ENCODE measurements at regions of chr5 and their contacts with region 1.

Region 1: DNA sequence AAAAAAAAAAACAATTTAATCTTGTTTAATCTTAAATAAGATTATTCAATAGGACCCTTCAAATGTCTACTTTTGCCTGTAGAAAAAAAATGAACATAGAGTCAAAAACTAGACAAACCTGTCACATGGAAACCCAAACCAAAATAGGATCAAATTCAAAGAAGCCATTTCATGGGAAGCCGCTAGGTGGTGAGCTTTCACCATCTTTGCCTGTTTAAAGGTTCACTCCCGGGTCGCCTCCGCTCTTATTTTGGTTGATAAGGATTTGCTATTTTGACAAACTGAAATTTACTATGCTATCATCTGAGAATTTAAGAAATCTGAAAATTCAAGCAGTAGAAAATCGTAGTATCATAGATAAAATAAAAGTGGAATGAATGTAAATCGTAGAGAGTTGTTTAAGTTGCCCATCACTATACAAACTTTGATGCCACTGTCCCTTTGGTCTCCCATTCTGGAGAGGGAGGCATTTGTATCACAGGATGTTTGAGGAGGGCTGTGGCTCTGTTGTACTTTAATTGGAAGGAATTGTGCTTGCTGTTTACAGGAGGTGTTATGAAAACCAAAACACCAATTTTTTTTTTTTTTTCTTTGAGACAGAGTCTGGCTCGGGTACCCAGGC is 43.5 kb upstream of the DNAH5 start:
- DNase-seq: peak; percentile 81
- ATAC-seq: peak; percentile 54
- H3K4me3 ChIP-seq: no peak overlapping the region
- H3K27ac ChIP-seq: peak overlapping the region; percentile 81
- H3K4me1 ChIP-seq: peaks cover 21% of the 10 kb centered on the region
- H3K27me3 ChIP-seq: no peaks in the 10 kb centered on the region
- CTCF ChIP-seq: peak; percentile 89
- POLR2A ChIP-seq: peak; percentile 51; the same call in 1 of the 2 replicates
- RAD21 ChIP-seq: peak; percentile 95

Region 2: GRCh38 chr5:14142827-14143548 is 155.0 kb after region 1 on chr5 and contains the start of gene TRIO:
- CTCF ChIA-PET with region 1: no interaction called
- POLR2A ChIA-PET with region 1: interaction called, 3 read pairs
- dilution Hi-C with region 1: no loop called
- in situ Hi-C with region 1: loop called (anchors 5 kb)
- intact Hi-C with region 1: loop called (anchors 1 kb)
- DNase-seq: peak; percentile 91
- ATAC-seq: peak; percentile 77
- H3K4me3 ChIP-seq: peak within 1 kb of the TSS; percentile 94
- H3K27ac ChIP-seq: peak within 1 kb of the TSS; percentile 100
- H3K4me1 ChIP-seq: peaks cover 10% of the 10 kb centered on the region
- H3K27me3 ChIP-seq: no peaks in the 10 kb centered on the region
- CTCF ChIP-seq: peak; percentile 45
- POLR2A ChIP-seq: peak; percentile 73
- RAD21 ChIP-seq: peak; percentile 32
- total RNA-seq, gene TRIO: 487 and 522 TPM in 2 replicates

Region 3: DNA sequence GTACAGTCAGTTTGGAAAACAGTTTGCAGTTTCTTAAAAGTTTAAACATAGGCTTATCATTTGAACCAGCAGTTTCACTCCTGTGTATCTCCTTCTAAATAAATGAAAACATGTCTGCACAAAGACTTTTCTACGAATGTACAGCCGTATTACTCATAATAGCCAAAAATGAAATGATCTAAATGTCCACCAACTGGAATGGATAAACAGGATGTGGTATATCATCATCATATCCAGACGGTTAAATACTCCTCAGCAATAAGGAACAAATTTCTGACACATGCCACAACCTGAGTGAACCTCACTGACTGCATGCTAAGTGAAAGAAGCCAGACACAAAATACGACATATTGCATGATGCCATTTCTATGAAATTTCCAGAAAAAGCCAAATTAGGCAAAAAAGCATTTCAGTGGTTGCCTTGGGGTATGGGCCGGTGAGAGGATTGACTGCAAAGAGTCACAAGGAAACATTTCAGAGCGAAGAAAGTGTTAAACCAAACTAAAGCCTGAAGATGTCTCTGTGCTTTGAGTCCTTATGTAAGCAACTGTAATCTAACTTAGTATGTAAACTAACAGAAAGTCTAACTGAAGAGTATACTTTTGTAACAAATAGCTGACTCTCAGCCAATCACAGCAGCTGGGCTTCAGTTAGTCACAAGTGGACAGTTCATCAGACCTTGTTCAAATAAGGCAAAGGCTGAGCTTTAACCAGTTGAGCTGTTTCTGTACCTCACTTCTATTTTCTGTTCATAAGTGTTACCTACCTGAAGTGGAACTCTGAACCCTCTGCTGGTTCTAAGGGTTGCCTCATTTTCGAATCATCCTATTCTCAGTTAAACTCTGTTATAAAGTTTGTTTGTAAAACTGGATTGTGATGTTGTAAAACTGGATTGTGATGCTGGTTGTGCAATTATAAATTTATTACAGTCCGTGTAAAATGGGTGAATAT is 220.4 kb after region 1 on chr5:
- CTCF ChIA-PET with region 1: no interaction called
- POLR2A ChIA-PET with region 1: no interaction called
- dilution Hi-C with region 1: no loop called
- in situ Hi-C with region 1: no loop called
- intact Hi-C with region 1: loop called (anchors 5 kb)
- DNase-seq: peak; percentile 94
- ATAC-seq: peak; percentile 73
- H3K4me3 ChIP-seq: peak overlapping the region; percentile 4; the same call in 1 of the 2 replicates
- H3K27ac ChIP-seq: peak overlapping the region; percentile 95
- H3K4me1 ChIP-seq: peaks cover 43% of the 10 kb centered on the region
- H3K27me3 ChIP-seq: no peaks in the 10 kb centered on the region
- CTCF ChIP-seq: no peak
- POLR2A ChIP-seq: no peak; the same call in none of the 2 replicates
- RAD21 ChIP-seq: peak; percentile 7

Region 4: GRCh38 chr5:14326035-14326903 is 338.3 kb after region 1 on chr5:
- CTCF ChIA-PET with region 1: interaction called, 3 read pairs
- POLR2A ChIA-PET with region 1: no interaction called
- dilution Hi-C with region 1: no loop called
- in situ Hi-C with region 1: no loop called
- intact Hi-C with region 1: loop called (anchors 10 kb)
- DNase-seq: no peak
- ATAC-seq: peak; percentile 16; the same call in 1 of the 2 replicates
- H3K4me3 ChIP-seq: no peak overlapping the region
- H3K27ac ChIP-seq: peak overlapping the region; percentile 45; the same call in 1 of the 2 replicates
- H3K4me1 ChIP-seq: peaks cover 34% of the 10 kb centered on the region
- H3K27me3 ChIP-seq: no peaks in the 10 kb centered on the region
- CTCF ChIP-seq: peak; percentile 18; the same call in 1 of the 2 replicates
- POLR2A ChIP-seq: no peak
- RAD21 ChIP-seq: no peak

Region 5: DNA sequence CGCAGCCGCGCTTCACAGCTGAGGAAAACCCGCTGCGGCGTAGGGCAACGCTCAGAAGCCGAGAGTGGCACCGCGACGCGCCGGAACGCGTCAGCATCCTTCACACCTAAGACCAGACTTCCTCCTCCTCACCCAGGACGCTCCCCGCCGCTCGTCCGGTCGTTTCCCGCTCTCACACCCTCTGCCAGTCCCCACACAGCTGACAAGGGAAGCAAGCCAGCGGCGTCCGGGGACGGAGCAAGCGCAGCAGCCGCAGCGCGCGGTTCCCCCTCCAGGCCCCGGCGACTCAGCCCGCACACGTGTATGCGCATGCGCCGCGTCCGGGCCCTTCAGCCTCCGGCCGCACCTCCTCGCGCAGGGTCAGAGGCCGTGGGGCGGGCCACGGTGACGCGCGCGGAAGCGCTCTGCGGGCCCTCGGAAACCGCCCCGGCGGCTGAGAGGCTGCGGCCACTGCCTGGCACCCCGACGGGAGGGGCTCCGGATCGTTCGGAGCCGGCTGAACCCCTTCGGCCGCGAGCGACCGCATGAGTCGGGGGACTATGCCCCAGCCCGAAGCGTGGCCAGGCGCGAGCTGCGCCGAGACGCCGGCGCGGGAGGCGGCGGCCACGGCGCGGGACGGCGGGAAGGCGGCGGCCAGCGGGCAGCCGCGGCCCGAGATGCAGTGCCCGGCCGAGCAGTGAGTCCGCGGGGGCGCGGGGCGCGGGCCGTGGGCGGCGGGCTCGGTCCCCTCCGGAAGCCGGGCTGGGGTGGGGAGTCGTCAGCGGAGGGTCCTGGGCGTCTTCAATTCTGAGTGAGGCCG is 676.5 kb after region 1 on chr5 and contains the start of gene OTULIN:
- CTCF ChIA-PET with region 1: no interaction called
- POLR2A ChIA-PET with region 1: no interaction called
- dilution Hi-C with region 1: no loop called
- in situ Hi-C with region 1: loop called (anchors 25 kb)
- intact Hi-C with region 1: no loop called
- DNase-seq: peak; percentile 85
- ATAC-seq: peak; percentile 91
- H3K4me3 ChIP-seq: peak within 1 kb of the TSS; percentile 64
- H3K27ac ChIP-seq: peak within 1 kb of the TSS; percentile 85
- H3K4me1 ChIP-seq: peaks cover 11% of the 10 kb centered on the region
- H3K27me3 ChIP-seq: no peaks in the 10 kb centered on the region
- CTCF ChIP-seq: no peak
- POLR2A ChIP-seq: peak; percentile 67
- RAD21 ChIP-seq: no peak
- total RNA-seq, gene OTULIN: 19.5 and 20.3 TPM in 2 replicates

Measured in IMR-90 (cell line).